ENCODE measurements at regions of chr16 and their contacts with region 1.

Region 1: DNA sequence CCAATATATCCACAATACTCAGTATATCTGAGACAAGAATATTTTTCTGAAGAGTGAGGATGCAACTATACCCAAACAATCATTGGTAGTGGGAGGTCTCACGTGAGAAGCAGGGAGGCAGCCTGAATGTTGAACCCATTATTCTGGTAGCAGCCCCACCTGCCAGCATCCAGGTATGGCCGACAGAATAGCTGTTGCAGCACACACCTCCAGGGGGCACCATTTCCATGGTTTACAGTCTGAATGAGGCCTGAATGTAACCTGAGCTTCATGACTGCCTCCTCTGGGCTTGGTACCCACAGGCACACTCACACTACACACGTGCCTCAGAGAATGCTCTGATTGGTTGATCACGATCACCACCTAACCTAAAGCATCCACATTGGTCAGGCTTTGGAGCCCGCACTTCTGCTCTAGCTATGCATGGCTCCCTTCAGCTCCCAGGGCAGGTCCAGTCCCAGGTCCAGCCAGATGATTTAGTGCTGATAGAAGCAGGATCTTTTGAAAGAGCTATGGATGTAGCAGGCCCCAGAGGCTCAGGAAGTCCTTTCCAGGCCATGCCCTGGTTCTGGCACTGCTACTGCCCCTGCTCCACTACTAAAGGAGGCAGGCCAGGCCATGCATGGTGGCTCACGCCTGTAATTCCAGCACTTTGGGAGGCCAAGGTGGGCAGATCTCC is 11.0 kb upstream of the CBFB start:
- DNase-seq: peak in 9 of 10 donors; percentile 39 to 93 (median 64)

Region 2: GRCh38 chr16:66964049-66964448 is 53.9 kb before region 1 on chr16:
- intact Hi-C with region 1: no loop called
- DNase-seq: peak in 3 of 10 donors; percentile 59 to 68 (median 59)

Region 3: DNA sequence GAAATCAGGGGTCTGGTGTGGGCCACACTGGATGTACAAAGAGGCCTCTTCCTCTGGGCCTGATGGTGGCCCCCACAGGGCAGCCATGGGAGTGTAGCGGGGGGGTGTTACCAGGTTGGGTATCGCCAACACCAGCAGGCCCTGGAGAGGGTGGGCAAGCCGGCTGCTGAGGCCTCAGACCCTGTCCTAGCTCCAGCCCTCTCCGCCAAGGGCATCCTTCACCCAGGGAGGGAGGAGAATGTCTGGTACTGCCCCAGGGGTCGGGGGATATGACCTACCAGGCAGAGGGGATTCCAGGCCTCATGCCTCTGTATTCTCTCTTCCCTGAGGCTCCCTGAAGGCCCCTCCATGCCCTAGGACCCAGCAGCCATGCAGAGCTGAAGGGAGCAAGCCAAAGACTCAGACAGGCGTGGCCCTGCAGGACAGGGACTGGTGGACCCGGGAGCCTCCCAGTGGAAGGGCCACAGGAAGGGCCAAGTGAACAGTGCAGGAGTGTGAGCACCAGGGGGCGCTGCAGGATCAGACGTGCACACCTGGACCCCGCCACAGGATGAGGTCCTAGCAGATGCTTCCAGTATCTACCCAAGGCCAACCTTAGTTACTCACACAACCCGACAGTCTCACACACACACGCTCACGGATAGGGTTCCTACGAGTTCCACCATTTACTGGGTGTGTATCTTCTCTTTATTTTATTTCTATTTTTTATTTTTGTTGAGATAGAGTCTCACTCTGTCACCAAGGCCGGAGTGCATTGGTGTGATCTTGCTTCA is 40.4 kb before region 1 on chr16:
- intact Hi-C with region 1: loop called (anchors 2 kb)
- DNase-seq: peak; percentile 80 to 99 (median 94)

Region 4: DNA sequence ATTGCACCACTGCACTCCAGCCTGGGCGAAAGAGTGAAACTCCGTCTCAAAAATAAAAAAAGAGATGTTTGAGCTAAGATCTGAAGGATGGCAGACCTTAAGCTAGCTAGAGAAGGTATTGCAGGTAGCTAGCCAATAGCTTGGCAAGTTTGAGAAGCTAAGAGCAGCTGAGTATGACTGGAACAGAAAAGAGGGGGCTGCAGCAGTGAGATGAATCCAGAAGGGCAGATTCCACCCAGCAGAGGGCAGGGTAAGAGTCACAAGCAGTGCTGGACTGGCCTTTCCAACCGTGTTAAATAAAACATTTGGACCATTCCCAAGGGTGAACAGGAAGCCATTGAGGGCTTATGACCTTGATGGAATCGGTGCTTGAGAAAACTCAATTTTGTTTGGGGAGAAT is 86.1 kb after region 1 on chr16:
- intact Hi-C with region 1: loop called (anchors 5 kb)
- DNase-seq: peak in 1 of 10 donors; percentile 27

Measured in posterior cingulate gyrus (tissue), 11 donors.